CD4-positive, alpha-beta memory T cell (primary cell): ENCODE measurements at regions of chr9 and their contacts with region 1.

Region 1: GRCh38 chr9:129177791-129178559 is at the start of gene IER5L:
- DNase-seq: peak; percentile 91 to 93 (median 92)
- H3K4me3 ChIP-seq: peak within 1 kb of the TSS; percentile 47 to 59
- H3K4me3 Mint-ChIP-seq: peak within 1 kb of the TSS; percentile 89 to 93 (median 90)
- H3K27ac ChIP-seq: peak within 1 kb of the TSS; percentile 14
- H3K27ac Mint-ChIP-seq: peak within 1 kb of the TSS in 4 of 7 donors; percentile 81 to 93 (median 88)
- H3K4me1 ChIP-seq: peaks cover 28% of the 10 kb centered on the region
- H3K4me1 Mint-ChIP-seq: peaks cover 6 to 16% (median 9%) of the 10 kb centered on the region in 4 donors
- H3K27me3 ChIP-seq: peaks cover under 1% of the 10 kb centered on the region
- H3K27me3 Mint-ChIP-seq: peaks cover 0 to 2% of the 10 kb centered on the region in 2 donors
- total RNA-seq, gene IER5L: 3.1 to 3.6 TPM

Region 2: GRCh38 chr9:129131300-129132145 is 46.5 kb before region 1 on chr9:
- CTCF ChIA-PET with region 1: interaction called, 96 read pairs
- POLR2A ChIA-PET with region 1: interaction called, 6 read pairs
- intact Hi-C with region 1: loop called (anchors 2 kb)
- DNase-seq: peak; percentile 81 to 85 (median 82)
- H3K4me3 ChIP-seq: no peak overlapping the region
- H3K4me3 Mint-ChIP-seq: no peak overlapping the region
- H3K27ac ChIP-seq: no peak overlapping the region
- H3K27ac Mint-ChIP-seq: peak overlapping the region in 6 of 7 donors; percentile 3 to 64 (median 48)
- H3K4me1 ChIP-seq: peaks cover 8% of the 10 kb centered on the region
- H3K4me1 Mint-ChIP-seq: peaks cover 0 to 13% (median 6%) of the 10 kb centered on the region in 4 donors
- H3K27me3 ChIP-seq: no peaks in the 10 kb centered on the region
- H3K27me3 Mint-ChIP-seq: no peaks in the 10 kb centered on the region

Region 3: GRCh38 chr9:129225815-129226214 is 47.8 kb after region 1 on chr9:
- CTCF ChIA-PET with region 1: interaction called, 13 read pairs
- POLR2A ChIA-PET with region 1: interaction called, 9 read pairs
- intact Hi-C with region 1: no loop called
- DNase-seq: peak in 4 of 5 donors; percentile 27 to 45 (median 39)
- H3K4me3 ChIP-seq: no peak overlapping the region
- H3K4me3 Mint-ChIP-seq: peak overlapping the region in 7 of 8 donors; percentile 25 to 65 (median 49)
- H3K27ac ChIP-seq: no peak overlapping the region
- H3K27ac Mint-ChIP-seq: peak overlapping the region in 6 of 7 donors; percentile 30 to 90 (median 63)
- H3K4me1 ChIP-seq: peaks cover 26% of the 10 kb centered on the region
- H3K4me1 Mint-ChIP-seq: peaks cover 12 to 39% (median 27%) of the 10 kb centered on the region in 4 donors
- H3K27me3 ChIP-seq: no peaks in the 10 kb centered on the region
- H3K27me3 Mint-ChIP-seq: no peaks in the 10 kb centered on the region

Region 4: GRCh38 chr9:129336601-129337331 is 158.8 kb after region 1 on chr9:
- CTCF ChIA-PET with region 1: no interaction called
- POLR2A ChIA-PET with region 1: no interaction called
- intact Hi-C with region 1: loop called (anchors 5 kb)
- DNase-seq: peak in 4 of 5 donors; percentile 21 to 29 (median 26)
- H3K4me3 ChIP-seq: peak overlapping the region in 1 of 2 donors; percentile 46
- H3K4me3 Mint-ChIP-seq: peak overlapping the region; percentile 77 to 96 (median 83)
- H3K27ac ChIP-seq: no peak overlapping the region
- H3K27ac Mint-ChIP-seq: peak overlapping the region in 3 of 7 donors; percentile 48 to 73 (median 63)
- H3K4me1 ChIP-seq: peaks cover 7% of the 10 kb centered on the region
- H3K4me1 Mint-ChIP-seq: peaks cover 0 to 13% (median 6%) of the 10 kb centered on the region in 4 donors
- H3K27me3 ChIP-seq: no peaks in the 10 kb centered on the region
- H3K27me3 Mint-ChIP-seq: peaks cover 0 to 5% of the 10 kb centered on the region in 2 donors

Region 5: DNA sequence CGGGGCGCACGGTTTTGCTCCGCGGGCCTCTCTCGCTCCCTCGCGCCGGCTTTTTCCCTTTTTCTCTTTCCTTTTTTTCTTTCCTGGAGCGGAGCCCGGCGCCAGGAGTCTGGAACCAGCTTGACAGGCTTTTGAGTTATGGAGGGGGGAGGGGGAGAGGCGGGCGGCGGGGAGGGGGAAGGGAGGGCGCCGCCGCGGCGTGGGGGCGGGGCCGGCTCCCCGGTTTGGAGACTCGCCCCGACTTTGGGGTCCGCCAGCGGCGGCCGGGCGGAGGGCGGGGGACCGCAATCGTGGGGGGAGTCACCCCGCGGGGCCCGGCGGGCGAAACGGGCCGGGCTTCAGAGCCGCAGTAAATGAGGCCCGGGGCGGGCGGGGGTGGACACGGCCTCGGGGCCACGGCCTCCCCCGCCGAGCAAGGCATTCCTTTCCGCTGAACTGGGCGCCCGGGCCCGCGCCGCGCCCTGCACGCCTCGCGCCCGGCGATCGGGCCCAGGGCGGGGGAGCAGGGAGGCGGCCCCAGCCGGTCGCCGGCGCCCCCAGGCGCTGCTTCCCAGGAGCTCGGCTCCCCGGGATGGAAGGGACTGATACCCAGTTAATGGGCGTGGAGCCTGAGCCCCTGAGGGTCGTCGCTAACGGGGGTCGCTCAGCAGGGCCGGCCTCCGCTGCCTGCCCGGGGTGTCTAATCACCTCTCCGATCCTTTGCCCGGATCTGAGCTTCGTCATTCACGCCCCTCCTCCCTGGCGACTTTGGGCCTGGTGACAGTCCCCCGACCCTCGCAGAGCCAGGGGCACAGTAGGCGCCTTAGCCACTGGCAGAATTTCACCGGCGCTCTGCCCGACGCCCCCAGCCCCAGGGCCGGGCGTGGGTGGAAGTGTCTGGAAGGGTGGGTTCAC is 304.8 kb after region 1 on chr9:
- CTCF ChIA-PET with region 1: no interaction called
- POLR2A ChIA-PET with region 1: interaction called, 14 read pairs
- intact Hi-C with region 1: no loop called
- DNase-seq: peak in 1 of 5 donors; percentile 38
- H3K4me3 ChIP-seq: peak overlapping the region in 1 of 2 donors; percentile 15
- H3K4me3 Mint-ChIP-seq: peak overlapping the region; percentile 55 to 81 (median 69)
- H3K27ac ChIP-seq: peak overlapping the region; percentile 62
- H3K27ac Mint-ChIP-seq: peak overlapping the region; percentile 57 to 93 (median 70)
- H3K4me1 ChIP-seq: peaks cover 31% of the 10 kb centered on the region
- H3K4me1 Mint-ChIP-seq: peaks cover 11 to 50% (median 25%) of the 10 kb centered on the region in 4 donors
- H3K27me3 ChIP-seq: no peaks in the 10 kb centered on the region
- H3K27me3 Mint-ChIP-seq: peaks cover 0 to 2% of the 10 kb centered on the region in 2 donors

Region 6: DNA sequence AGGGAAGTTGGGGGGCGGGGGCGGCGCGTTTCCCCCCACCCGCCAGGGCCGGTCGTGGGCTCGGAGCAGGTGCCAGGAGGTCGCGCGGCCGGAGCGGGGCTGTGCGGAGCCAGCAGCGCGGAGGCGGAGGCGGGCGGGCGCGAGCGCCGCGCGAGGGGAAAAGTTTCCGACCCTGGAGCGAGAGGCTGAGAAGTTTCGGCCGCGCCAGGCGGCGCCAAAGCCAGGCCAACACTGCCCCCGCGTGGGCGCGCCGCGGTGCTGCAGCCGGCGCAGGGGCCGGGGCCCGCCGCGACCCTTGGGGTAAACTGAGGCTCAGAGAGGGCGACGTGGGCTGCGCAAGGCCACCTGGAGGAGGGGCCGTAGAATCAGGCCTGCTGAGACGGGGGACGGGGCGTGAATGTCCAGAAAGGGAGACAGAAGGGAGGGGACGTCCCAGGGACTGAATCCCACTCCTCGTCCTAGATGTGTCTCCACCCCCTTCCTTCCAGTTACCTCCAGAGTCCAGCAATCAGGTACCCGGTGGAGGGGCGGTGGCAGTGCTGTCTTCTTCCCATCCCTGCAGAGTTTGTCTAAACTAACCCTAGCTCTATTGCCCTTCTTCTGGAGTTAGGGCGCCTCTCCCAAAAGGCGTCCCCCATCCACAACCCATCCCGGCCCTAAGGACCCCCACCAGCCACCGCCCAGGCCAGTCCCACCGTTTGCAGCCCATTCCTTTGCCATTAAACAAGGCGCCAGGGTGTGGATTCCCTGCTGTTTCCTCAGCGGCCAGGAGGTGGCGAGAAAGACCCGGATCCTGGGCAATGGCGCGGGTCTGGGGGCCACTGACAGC is 432.7 kb after region 1 on chr9:
- CTCF ChIA-PET with region 1: interaction called, 17 read pairs
- POLR2A ChIA-PET with region 1: interaction called, 25 read pairs
- intact Hi-C with region 1: loop called (anchors 1 kb)
- DNase-seq: peak; percentile 72 to 76 (median 74)
- H3K4me3 ChIP-seq: peak overlapping the region; percentile 61 to 70
- H3K4me3 Mint-ChIP-seq: peak overlapping the region; percentile 78 to 95 (median 81)
- H3K27ac ChIP-seq: peak overlapping the region; percentile 50
- H3K27ac Mint-ChIP-seq: peak overlapping the region; percentile 65 to 95 (median 88)
- H3K4me1 ChIP-seq: peaks cover 28% of the 10 kb centered on the region
- H3K4me1 Mint-ChIP-seq: peaks cover 16 to 45% (median 33%) of the 10 kb centered on the region in 4 donors
- H3K27me3 ChIP-seq: no peaks in the 10 kb centered on the region
- H3K27me3 Mint-ChIP-seq: no peaks in the 10 kb centered on the region